ENCODE measurements at regions of chr10 and their contacts with region 1.

Region 1: GRCh38 chr10:63629363-63630084 is 108.3 kb downstream of the REEP3 start:
- DNase-seq: peak; percentile 83 to 99
- H3K4me3 ChIP-seq: peak overlapping the region; percentile 67 to 70
- H3K27ac ChIP-seq: peak overlapping the region; percentile 90 to 99
- H3K4me1 ChIP-seq: peaks cover 0 to 20% of the 10 kb centered on the region in 2 donors
- H3K27me3 ChIP-seq: no peaks in the 10 kb centered on the region
- CTCF ChIP-seq: peak; percentile 67 to 74 (median 73)

Region 2: DNA sequence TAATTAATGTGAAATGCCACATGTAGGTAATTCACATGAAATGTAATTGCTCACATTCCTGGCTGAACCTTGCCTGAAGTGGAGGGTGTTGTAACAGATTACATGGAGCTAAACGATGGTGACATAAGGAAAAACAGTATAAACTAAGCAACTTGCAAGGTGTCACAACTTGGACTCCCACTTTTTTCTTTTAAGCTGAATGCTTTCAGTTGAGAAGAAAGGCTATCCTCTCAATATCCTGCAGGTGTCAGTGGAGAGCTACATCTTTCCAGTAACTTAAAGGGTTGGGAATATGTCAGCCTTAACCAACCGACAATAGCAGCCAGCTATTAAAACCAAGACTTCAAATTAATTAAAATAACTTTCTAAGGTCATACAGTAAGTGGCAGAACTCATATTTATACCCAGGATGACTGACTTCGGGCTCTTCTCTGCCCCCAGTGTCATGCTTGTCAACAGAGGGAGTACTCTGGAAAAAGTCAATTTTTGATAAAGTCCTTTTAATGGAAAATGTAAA is 462.7 kb before region 1 on chr10:
- intact Hi-C with region 1: loop called (anchors 5 kb)
- DNase-seq: no peak
- H3K4me3 ChIP-seq: no peak overlapping the region
- H3K27ac ChIP-seq: no peak overlapping the region
- H3K4me1 ChIP-seq: no peaks in the 10 kb centered on the region
- H3K27me3 ChIP-seq: no peaks in the 10 kb centered on the region
- CTCF ChIP-seq: peak; percentile 61 to 90 (median 88)

Region 3: DNA sequence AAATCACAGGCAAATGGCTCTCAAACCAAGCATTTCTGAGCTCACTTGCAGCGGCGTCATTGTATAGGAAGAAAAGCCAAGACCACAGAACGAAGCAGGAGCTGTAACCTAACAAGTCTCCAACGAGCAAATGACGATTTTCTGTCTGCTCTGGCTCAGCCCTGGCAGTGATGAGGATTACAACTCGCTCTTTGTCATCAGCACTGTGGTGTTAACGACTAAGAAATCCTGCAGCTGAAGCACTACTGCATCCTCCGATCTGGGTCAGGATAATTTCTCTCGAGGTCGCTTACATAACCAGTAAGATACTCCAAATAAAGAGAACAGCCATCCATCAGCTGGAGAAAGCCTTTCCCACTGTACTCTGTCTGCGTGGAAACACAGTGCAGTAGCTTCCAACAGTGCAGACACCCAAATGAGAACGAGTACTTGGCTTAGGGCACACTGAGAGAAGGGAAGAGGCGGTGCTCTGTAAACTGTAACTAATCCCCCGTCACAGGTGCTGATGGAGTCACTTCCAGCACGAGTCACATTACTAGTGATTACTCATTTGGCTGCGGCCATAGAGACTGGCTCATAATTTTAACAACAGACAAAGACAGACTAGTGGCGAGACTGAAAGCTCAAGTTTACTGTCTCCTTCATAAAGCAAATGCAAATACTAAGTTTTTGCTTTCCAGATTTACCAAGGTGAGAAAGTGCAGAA is 360.6 kb before region 1 on chr10:
- intact Hi-C with region 1: loop called (anchors 2 kb)
- DNase-seq: peak; percentile 81 to 95
- H3K4me3 ChIP-seq: peak overlapping the region; percentile 55 to 64
- H3K27ac ChIP-seq: peak overlapping the region; percentile 76 to 84
- H3K4me1 ChIP-seq: no peaks in the 10 kb centered on the region
- H3K27me3 ChIP-seq: no peaks in the 10 kb centered on the region
- CTCF ChIP-seq: peak; percentile 20 to 54 (median 45)

Region 4: DNA sequence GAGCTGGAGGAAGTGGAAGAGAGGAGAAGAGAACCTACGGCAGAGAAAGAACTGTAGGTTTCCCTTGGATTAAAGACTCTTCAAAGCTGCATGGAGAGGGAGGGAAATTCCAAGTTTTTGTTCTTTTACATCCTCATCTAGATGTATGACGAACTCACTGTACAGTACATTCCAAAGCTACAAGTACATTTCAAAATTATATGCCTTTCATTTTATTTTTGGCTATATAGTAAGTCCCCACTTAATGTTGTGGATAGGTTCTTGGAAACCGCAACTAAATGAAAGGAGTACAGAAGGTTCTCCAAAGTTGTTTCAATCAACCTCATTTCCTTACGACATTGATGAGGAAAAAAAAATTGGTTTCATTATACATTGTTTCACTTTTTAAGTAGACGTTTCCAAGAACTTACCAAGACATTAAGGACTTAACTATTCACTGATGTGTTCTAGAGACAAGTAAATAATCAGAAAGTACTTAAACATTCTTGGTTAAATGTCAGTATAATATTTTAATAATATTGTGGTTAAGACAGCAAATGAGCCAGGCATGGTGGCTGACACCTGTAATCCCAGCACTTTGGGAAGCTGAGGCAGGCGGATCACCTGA is 147.6 kb before region 1 on chr10:
- intact Hi-C with region 1: no loop called
- DNase-seq: no peak
- H3K4me3 ChIP-seq: no peak overlapping the region
- H3K27ac ChIP-seq: no peak overlapping the region
- H3K4me1 ChIP-seq: peaks cover 0 to 4% of the 10 kb centered on the region in 2 donors
- H3K27me3 ChIP-seq: no peaks in the 10 kb centered on the region
- CTCF ChIP-seq: no peak

Region 5: GRCh38 chr10:63521416-63522276 is 107.9 kb before region 1 on chr10:
- intact Hi-C with region 1: loop called (anchors 1 kb)
- DNase-seq: peak in 1 of 2 donors; percentile 76
- H3K4me3 ChIP-seq: peak overlapping the region; percentile 81 to 90
- H3K27ac ChIP-seq: peak overlapping the region; percentile 97
- H3K4me1 ChIP-seq: peaks cover 0 to 23% of the 10 kb centered on the region in 2 donors
- H3K27me3 ChIP-seq: no peaks in the 10 kb centered on the region
- CTCF ChIP-seq: no peak

Region 6: DNA sequence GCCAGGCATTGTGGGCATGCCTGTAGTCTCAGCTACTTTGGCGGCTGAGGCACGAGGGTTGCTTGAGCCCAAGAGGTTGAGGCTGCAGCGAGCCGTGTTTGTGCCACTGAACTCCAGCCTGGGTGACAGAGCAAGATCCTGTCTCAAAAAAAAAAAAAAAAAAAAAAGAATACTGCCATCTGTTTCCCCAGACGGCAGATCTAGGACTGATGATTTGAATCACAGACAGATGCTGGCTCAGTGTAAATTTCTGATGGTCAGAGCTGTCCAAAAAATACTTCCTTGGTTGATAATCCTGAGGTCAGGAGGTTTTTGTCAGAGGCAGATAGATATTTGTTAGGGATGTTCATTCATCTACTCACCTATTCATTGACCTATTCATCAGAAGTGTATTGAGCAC is 22.3 kb after region 1 on chr10:
- intact Hi-C with region 1: no loop called
- DNase-seq: no peak
- H3K4me3 ChIP-seq: no peak overlapping the region
- H3K27ac ChIP-seq: no peak overlapping the region
- H3K4me1 ChIP-seq: no peaks in the 10 kb centered on the region
- H3K27me3 ChIP-seq: no peaks in the 10 kb centered on the region
- CTCF ChIP-seq: no peak

Region 7: GRCh38 chr10:63711867-63712716 is 82.6 kb after region 1 on chr10:
- intact Hi-C with region 1: loop called (anchors 1 kb)
- DNase-seq: peak; percentile 89 to 98
- H3K4me3 ChIP-seq: peak overlapping the region in 1 of 2 donors; percentile 2
- H3K27ac ChIP-seq: peak overlapping the region; percentile 89 to 91
- H3K4me1 ChIP-seq: peaks cover 8 to 42% of the 10 kb centered on the region in 2 donors
- H3K27me3 ChIP-seq: no peaks in the 10 kb centered on the region
- CTCF ChIP-seq: no peak

Region 8: GRCh38 chr10:63798599-63799498 is 169.3 kb after region 1 on chr10:
- intact Hi-C with region 1: loop called (anchors 1 kb)
- DNase-seq: peak; percentile 58 to 91
- H3K4me3 ChIP-seq: peak overlapping the region in 1 of 2 donors; percentile 35
- H3K27ac ChIP-seq: peak overlapping the region; percentile 73 to 74
- H3K4me1 ChIP-seq: peaks cover 5 to 18% of the 10 kb centered on the region in 2 donors
- H3K27me3 ChIP-seq: no peaks in the 10 kb centered on the region
- CTCF ChIP-seq: peak in 1 of 3 experiments; percentile 24